HCT116 (cell line): ENCODE measurements at regions of chrX and their contacts with region 1.

Region 1: GRCh38 chrX:77899081-77899828 is at the start of gene COX7B:
- DNase-seq: peak; percentile 94
- ATAC-seq: peak; percentile 72
- H3K4me3 ChIP-seq: peak within 1 kb of the TSS; percentile 77 to 81
- H3K27ac ChIP-seq: peak within 1 kb of the TSS; percentile 71
- H3K4me1 ChIP-seq: peaks cover 0 to 11% of the 10 kb centered on the region in 2 experiments; a peak in 3 of 4 replicates
- H3K27me3 ChIP-seq: no peaks in the 10 kb centered on the region
- CTCF ChIP-seq: peak; percentile 12 to 43 (median 39); a peak in 5 of 6 replicates
- POLR2A ChIP-seq: peak; percentile 46
- RAD21 ChIP-seq: peak; percentile 49
- total RNA-seq, gene COX7B: 268 TPM

Region 2: DNA sequence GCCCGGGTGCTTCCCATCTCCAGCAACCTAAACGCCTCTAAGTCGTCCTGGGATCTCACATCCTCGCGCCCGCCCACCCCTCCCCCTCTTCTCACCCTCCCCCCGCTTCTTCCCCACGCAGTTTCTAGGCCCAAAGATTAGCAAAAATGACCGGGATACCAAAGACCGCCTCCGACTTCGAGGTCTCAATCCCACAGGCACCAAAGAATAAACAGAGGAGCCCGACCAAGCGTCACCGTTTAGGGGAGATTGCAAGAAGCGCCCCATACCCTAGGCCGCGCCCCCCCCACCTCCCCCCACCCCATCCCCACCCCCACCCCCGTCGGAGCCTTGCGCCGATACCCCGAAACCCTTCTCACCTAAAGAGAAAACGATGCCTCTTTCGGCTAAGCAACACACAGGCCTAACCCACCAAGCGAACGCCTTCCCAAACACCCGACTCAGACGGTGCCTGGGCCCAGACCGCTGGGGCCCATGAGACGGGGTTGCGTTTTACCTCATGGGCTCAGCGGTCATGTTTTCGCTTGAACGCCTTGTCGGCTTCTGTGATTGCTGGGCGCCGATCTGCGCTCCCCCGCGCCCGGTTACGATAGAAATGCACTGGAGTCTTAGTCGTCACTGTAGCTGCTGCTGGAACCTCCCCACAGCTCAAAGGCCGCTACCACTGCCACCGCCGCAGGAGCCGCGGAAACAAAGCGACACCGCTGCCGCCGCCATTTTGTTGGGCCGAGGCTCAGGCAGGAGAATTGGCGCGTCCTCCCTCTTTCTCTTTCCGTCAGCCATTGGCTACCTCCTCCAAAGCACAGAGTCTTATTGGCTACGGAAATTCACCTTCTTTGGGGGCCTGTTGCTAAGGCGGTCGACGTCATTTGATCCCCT is 113.5 kb before region 1 on chrX and contains the start of gene ATRX:
- CTCF ChIA-PET with region 1: no interaction called
- POLR2A ChIA-PET with region 1: no interaction called
- RAD21 ChIA-PET with region 1: no interaction called
- intact Hi-C with region 1: loop called (anchors 5 kb)
- DNase-seq: peak; percentile 57
- ATAC-seq: peak; percentile 95
- H3K4me3 ChIP-seq: peak within 1 kb of the TSS; percentile 68 to 83
- H3K27ac ChIP-seq: peak within 1 kb of the TSS; percentile 66
- H3K4me1 ChIP-seq: peaks cover 0 to 18% of the 10 kb centered on the region in 2 experiments; a peak in 1 of 4 replicates
- H3K27me3 ChIP-seq: no peaks in the 10 kb centered on the region
- CTCF ChIP-seq: no peak
- POLR2A ChIP-seq: peak; percentile 69
- RAD21 ChIP-seq: no peak
- total RNA-seq, gene ATRX: 61.3 TPM

Region 3: DNA sequence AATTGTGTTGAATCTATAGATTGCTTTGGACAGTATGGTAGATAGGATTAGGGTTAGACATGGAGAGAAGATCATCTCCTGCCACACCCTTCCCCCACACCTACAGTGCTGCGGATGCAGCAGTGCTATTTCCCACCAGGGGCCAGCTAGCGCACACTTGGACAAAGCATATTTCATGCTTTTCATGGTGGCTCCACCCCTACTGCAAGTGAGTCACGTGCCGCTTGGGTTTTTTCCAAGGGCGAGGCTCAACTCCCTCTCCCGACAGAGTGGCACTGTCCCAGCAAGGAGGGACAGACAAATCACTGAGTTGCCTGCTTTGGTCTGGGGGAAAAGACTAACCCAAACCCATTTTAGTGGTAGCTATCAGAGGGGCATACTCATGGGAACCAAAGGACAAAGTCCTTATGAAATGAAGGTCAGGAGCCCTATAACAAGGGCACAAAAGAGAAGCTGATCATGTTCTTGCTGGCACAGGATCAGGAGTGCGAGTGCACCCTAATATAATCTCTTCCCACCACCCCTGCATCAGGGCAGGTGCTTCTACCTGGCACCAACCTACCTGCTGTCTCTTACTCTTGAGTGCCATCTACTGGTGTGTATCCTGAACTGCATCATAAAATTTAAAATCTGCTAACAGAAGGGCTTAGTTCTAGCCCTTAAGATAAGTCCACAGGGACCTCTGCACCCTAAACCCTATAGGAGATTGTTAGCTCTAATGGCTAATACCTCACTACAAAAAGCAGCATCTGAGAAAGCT is 125.3 kb after region 1 on chrX:
- CTCF ChIA-PET with region 1: interaction called, 6 read pairs
- POLR2A ChIA-PET with region 1: interaction called, 4 read pairs
- RAD21 ChIA-PET with region 1: interaction called in 1 of 2 experiments, 3 read pairs
- intact Hi-C with region 1: loop called (anchors 5 kb)
- DNase-seq: peak; percentile 43
- ATAC-seq: peak; percentile 97
- H3K4me3 ChIP-seq: no peak overlapping the region
- H3K27ac ChIP-seq: peak overlapping the region; percentile 33; the same call in 1 of the 2 replicates
- H3K4me1 ChIP-seq: peaks cover 7 to 12% of the 10 kb centered on the region in 2 experiments; a peak in 3 of 4 replicates
- H3K27me3 ChIP-seq: no peaks in the 10 kb centered on the region
- CTCF ChIP-seq: peak; percentile 41 to 74 (median 46); a peak in 4 of 6 replicates
- POLR2A ChIP-seq: no peak
- RAD21 ChIP-seq: peak; percentile 73

Region 4: GRCh38 chrX:78103623-78104446 is 204.6 kb after region 1 on chrX and contains the start of gene PGK1:
- CTCF ChIA-PET with region 1: no interaction called
- POLR2A ChIA-PET with region 1: no interaction called
- RAD21 ChIA-PET with region 1: no interaction called
- intact Hi-C with region 1: loop called (anchors 5 kb)
- DNase-seq: peak; percentile 89
- ATAC-seq: peak; percentile 97
- H3K4me3 ChIP-seq: peak within 1 kb of the TSS; percentile 90 to 91
- H3K27ac ChIP-seq: peak within 1 kb of the TSS; percentile 88
- H3K4me1 ChIP-seq: peaks cover 8 to 35% of the 10 kb centered on the region in 2 experiments; a peak in 3 of 4 replicates
- H3K27me3 ChIP-seq: no peaks in the 10 kb centered on the region
- CTCF ChIP-seq: no peak
- POLR2A ChIP-seq: peak; percentile 45
- RAD21 ChIP-seq: no peak
- total RNA-seq, gene PGK1: 492 TPM

Region 5: GRCh38 chrX:79371101-79371500 is 1471.8 kb after region 1 on chrX:
- CTCF ChIA-PET with region 1: no interaction called
- POLR2A ChIA-PET with region 1: no interaction called
- RAD21 ChIA-PET with region 1: no interaction called
- intact Hi-C with region 1: no loop called
- DNase-seq: no peak
- ATAC-seq: no peak
- H3K4me3 ChIP-seq: no peak overlapping the region
- H3K27ac ChIP-seq: no peak overlapping the region
- H3K4me1 ChIP-seq: no peaks in the 10 kb centered on the region
- H3K27me3 ChIP-seq: no peaks in the 10 kb centered on the region
- CTCF ChIP-seq: no peak
- POLR2A ChIP-seq: no peak
- RAD21 ChIP-seq: no peak